Mammary epithelial cell (primary cell): ENCODE measurements at regions of chr19 and their contacts with region 1.

Region 1: DNA sequence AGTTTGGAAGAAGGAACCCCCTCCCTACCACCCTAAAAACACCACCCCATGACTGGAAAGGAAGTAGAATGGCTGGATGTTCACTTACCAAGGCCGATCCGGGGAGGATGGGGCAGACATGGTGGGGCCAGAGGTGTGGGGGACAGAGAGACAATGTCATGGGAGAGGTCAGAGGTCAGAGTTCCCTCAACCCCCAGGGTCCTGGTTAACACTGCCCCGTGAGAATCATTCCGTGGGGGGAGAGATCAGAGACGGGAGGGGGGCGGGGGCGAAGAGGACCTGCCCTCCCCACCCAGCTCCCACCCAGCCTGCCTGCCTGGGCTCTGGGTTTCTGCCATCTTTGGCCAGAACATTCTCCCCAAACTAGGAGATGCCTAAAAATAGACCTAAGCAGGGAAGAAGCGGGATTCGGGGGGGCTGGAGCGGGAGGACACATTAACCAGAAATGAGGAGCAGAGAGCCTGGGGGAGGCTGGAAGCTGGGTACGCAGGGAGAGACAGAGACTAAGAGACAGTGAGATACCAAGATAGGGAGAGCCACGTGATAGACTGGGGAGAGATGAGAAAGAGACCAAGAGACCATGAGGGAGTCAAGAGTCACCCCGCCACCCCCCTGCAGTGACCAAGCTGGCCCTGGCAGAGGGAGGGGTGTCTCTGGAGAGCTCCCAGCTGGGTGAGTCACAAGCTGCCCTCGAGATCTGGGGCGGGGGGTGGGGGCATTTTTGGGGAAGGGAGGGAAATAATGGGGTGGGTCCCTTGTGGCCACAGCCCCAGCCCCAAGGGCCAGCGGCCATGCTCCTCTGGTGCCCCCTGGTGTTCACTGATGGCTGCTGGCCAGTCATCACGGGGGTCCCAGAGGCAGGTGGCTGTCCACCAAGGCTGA is 6.1 kb upstream of the KANK2 start:
- DNase-seq: peak; percentile 11
- H3K4me3 ChIP-seq: no peak overlapping the region
- H3K27ac ChIP-seq: no peak overlapping the region
- H3K4me1 ChIP-seq: peaks cover 19% of the 10 kb centered on the region
- H3K27me3 ChIP-seq: no peaks in the 10 kb centered on the region
- CTCF ChIP-seq: peak; percentile 54 to 89

Region 2: DNA sequence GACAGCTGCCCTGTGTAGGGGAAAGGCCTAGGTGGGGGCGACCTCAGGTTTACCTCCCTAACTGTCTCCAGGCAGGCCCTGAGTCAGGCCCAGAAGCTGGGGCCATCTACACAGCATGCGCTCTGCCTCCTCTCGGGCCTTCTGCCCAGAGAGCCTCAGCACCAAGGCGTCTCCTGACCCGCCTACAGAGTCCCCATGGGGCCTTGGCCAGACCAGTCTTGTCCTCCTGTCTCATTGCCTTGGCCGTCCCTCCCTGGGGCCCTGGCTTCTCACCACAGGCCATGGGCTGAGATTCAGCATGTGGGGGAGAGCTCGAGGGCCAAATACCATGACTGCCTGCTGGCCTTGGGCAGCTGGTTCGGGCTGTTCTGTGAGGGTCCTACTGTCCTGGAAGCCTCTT is 183.6 kb before region 1 on chr19:
- CTCF ChIA-PET with region 1: no interaction called
- dilution Hi-C with region 1: loop called (anchors 10 kb)
- in situ Hi-C with region 1: no loop called
- intact Hi-C with region 1: no loop called
- DNase-seq: no peak
- H3K4me3 ChIP-seq: no peak overlapping the region
- H3K27ac ChIP-seq: no peak overlapping the region
- H3K4me1 ChIP-seq: peaks cover 8% of the 10 kb centered on the region
- H3K27me3 ChIP-seq: no peaks in the 10 kb centered on the region
- CTCF ChIP-seq: no peak

Region 3: GRCh38 chr19:11035441-11036377 is 167.7 kb before region 1 on chr19:
- CTCF ChIA-PET with region 1: interaction called, 3 read pairs
- dilution Hi-C with region 1: no loop called
- in situ Hi-C with region 1: no loop called
- intact Hi-C with region 1: loop called (anchors 2 kb)
- DNase-seq: peak; percentile 80
- H3K4me3 ChIP-seq: no peak overlapping the region
- H3K27ac ChIP-seq: no peak overlapping the region
- H3K4me1 ChIP-seq: peaks cover 13% of the 10 kb centered on the region
- H3K27me3 ChIP-seq: no peaks in the 10 kb centered on the region
- CTCF ChIP-seq: peak; percentile 88 to 98

Region 4: DNA sequence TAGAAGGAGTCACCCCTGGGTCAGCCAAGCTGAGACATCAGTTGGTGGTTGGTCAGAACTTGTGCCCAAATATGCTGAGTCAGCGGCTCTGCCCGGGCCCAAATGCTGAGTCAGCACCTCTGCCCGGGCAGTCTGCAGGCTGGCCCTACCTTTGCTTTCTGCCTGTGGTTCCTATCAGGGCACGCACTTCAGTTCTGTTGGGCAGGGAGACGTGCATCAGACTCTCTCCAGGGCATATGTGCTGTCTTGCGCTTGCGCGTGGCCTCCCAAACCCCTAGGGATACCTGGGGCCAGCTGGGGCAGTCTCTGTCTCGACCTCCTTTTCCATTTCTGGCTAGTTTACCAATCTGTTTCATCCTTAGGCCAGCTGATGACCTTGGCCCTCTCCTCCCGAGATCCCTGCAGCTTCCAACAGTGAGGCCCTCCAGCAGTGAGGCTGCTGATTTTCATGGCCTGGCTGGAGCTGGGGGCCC is 138.6 kb before region 1 on chr19:
- CTCF ChIA-PET with region 1: no interaction called
- dilution Hi-C with region 1: loop called (anchors 10 kb)
- in situ Hi-C with region 1: no loop called
- intact Hi-C with region 1: no loop called
- DNase-seq: no peak
- H3K4me3 ChIP-seq: no peak overlapping the region
- H3K27ac ChIP-seq: no peak overlapping the region
- H3K4me1 ChIP-seq: no peaks in the 10 kb centered on the region
- H3K27me3 ChIP-seq: no peaks in the 10 kb centered on the region
- CTCF ChIP-seq: no peak

Region 5: GRCh38 chr19:11125994-11126685 is 77.3 kb before region 1 on chr19:
- CTCF ChIA-PET with region 1: no interaction called
- dilution Hi-C with region 1: no loop called
- in situ Hi-C with region 1: no loop called
- intact Hi-C with region 1: loop called (anchors 1 kb)
- DNase-seq: no peak
- H3K4me3 ChIP-seq: no peak overlapping the region
- H3K27ac ChIP-seq: no peak overlapping the region
- H3K4me1 ChIP-seq: no peaks in the 10 kb centered on the region
- H3K27me3 ChIP-seq: no peaks in the 10 kb centered on the region
- CTCF ChIP-seq: peak; percentile 64 to 77